K562 (cell line): ENCODE measurements at regions of chr19 and their contacts with region 1.

Region 1: GRCh38 chr19:48501496-48502350 is 9.9 kb downstream of the LMTK3 start:
- DNase-seq: peak; percentile 95 to 97 (median 96)
- ATAC-seq: peak; percentile 91
- H3K4me3 ChIP-seq: peak overlapping the region; percentile 51
- H3K27ac ChIP-seq: peak overlapping the region; percentile 73
- H3K4me1 ChIP-seq: peaks cover 10 to 50% of the 10 kb centered on the region in 2 experiments; a peak in 4 of 5 replicates
- H3K27me3 ChIP-seq: no peaks in the 10 kb centered on the region
- CTCF ChIP-seq: 0 out of 6 replicates have a peak, but pooled peaks of 1 of the 3 experiments have one; percentile 10
- EP300 ChIP-seq: no peak; the same call in 1 of the 2 replicates
- POLR2A ChIP-seq: peak; percentile 80
- RAD21 ChIP-seq: no peak

Region 2: DNA sequence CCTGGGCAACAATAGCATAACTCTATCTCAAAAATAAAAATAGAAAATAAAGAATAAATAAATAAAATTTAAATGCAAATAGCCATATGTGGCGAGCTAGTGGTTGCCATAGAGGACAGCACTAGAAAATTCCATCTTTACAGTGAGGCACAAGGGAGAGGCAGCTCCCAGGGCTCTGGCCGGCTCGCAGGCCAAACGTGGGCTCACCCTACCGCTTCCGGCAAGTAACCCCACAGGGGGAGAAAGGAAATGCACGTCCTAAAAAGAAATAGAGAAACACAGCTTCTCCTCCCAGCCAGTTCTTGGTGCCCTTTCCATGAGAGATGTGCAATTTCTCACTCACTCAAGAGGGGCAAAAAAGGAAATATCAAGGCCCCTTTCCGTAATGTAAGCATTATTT is 68.4 kb before region 1 on chr19:
- CTCF ChIA-PET with region 1: no interaction called
- POLR2A ChIA-PET with region 1: no interaction called
- in situ Hi-C with region 1: no loop called
- intact Hi-C with region 1: no loop called
- DNase-seq: no peak
- ATAC-seq: no peak
- H3K4me3 ChIP-seq: no peak overlapping the region
- H3K27ac ChIP-seq: no peak overlapping the region
- H3K4me1 ChIP-seq: no peaks in the 10 kb centered on the region
- H3K27me3 ChIP-seq: no peaks in the 10 kb centered on the region
- CTCF ChIP-seq: no peak
- EP300 ChIP-seq: no peak
- POLR2A ChIP-seq: no peak
- RAD21 ChIP-seq: no peak

Region 3: DNA sequence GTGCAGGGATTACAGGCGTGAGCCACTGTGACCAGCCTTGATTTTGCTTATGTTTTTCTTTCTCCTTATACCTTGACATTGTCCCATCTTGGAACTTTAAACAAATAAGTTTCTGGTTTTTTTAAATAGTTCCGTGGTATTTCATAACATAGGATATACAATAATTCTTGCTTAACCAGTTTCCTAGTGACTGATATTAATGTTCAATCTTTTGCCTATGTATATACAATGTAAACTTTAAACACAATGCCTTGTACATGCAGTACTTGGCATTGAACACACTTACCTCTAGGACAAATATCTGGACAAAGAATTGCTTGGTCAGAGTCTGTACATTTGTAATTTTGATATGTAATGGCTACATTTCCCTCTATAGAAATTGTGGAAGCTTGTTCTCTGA is 80.4 kb after region 1 on chr19:
- CTCF ChIA-PET with region 1: interaction called, 32 read pairs
- POLR2A ChIA-PET with region 1: interaction called, 10 read pairs
- in situ Hi-C with region 1: loop called (anchors 5 kb)
- intact Hi-C with region 1: loop called (anchors 1 kb)
- DNase-seq: no peak
- ATAC-seq: no peak
- H3K4me3 ChIP-seq: no peak overlapping the region
- H3K27ac ChIP-seq: no peak overlapping the region
- H3K4me1 ChIP-seq: peaks cover 3 to 8% of the 10 kb centered on the region in 2 experiments; a peak in 1 of 5 replicates
- H3K27me3 ChIP-seq: no peaks in the 10 kb centered on the region
- CTCF ChIP-seq: no peak
- EP300 ChIP-seq: no peak
- POLR2A ChIP-seq: no peak
- RAD21 ChIP-seq: no peak